ENCODE measurements at regions of chr3 and their contacts with region 1.

Region 1: DNA sequence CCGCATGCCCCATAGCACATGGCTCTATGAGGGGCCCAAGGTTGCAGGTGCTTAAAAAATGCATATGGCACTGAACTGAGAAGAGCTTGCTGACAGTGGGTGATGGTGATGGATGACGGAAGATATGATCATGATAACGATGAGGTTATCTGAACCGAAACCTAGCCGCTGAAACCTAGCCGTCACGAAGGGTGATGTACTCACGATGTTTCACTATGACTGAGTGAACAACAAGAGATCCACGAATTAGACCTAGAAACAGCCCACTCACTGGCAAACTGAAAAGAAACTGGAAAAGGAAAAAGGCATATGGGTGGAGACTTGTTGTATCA is 57.6 kb upstream of the BCL6 start:
- DNase-seq: peak; percentile 94
- H3K4me3 Mint-ChIP-seq: peak overlapping the region; percentile 36
- H3K27ac Mint-ChIP-seq: peak overlapping the region; percentile 97
- H3K4me1 Mint-ChIP-seq: peaks cover 90% of the 10 kb centered on the region
- H3K27me3 Mint-ChIP-seq: no peaks in the 10 kb centered on the region

Region 2: DNA sequence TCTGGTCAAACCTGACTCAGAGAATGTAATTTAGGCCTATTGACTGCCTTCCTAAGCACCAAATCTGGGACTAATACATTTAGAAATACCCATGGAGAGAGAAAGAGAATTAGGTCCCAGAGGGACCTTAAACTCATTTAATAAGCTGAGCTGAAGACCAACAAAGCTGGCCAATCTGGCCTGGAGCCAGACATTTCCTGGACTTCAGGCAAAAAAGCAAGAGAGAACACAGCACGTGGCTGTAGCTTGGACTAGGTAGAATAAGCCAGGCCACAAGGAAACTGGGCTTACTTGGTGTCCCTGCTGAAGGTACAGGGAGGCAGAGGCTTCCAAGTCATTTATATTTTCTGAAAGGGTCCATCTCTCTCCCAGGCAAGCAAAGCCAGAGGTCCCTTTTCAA is 346.6 kb before region 1 on chr3:
- intact Hi-C with region 1: no loop called
- DNase-seq: no peak
- H3K4me3 Mint-ChIP-seq: no peak overlapping the region
- H3K27ac Mint-ChIP-seq: no peak overlapping the region
- H3K4me1 Mint-ChIP-seq: no peaks in the 10 kb centered on the region
- H3K27me3 Mint-ChIP-seq: peaks cover 16% of the 10 kb centered on the region

Region 3: DNA sequence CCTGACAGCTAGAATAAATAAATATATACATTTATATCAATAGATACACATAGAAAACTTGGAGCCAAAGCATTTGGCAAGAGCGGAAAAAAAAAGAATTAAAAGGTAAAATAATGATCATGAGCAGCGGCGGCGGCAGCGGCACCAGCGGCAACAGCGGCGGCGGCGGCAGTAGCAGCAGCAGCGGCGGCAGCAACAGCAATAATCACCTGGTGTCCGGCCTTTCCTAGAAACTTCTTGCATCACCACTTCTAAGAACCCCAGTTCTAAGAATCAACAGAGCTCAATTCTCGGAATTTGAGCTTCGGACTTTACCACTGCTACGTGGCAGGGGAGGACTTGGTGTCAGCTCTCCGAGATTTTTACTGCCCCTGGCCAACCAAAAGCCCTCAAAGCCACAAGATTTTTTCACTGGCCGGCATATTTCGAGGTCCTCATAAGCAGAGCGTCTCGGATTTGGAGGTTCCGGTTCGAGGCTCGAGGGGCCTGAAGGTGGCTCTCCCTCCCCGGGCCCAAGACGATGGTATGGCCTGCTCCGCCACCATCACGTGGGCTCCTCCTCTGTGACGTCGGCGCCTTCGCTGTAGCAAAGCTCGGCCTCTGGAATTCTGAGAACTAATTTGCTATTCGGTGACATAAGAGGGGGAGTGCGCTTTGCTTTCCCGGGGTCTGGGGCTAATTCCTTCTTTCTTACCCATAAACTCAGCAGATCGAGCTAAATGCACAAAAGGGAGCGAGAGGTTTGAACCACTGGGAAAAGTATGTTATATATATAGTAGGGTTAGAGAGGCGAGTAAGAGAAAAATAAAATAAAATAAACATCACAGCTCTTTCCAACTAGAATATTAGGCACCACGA is 57.5 kb before region 1 on chr3 and contains the start of gene BCL6:
- intact Hi-C with region 1: loop called (anchors 1 kb)
- DNase-seq: peak; percentile 97
- H3K4me3 Mint-ChIP-seq: peak within 1 kb of the TSS; percentile 98
- H3K27ac Mint-ChIP-seq: peak within 1 kb of the TSS; percentile 99
- H3K4me1 Mint-ChIP-seq: peaks cover 61% of the 10 kb centered on the region
- H3K27me3 Mint-ChIP-seq: no peaks in the 10 kb centered on the region
- total RNA-seq, gene BCL6: 41.7 and 51.7 TPM in 2 replicates

Region 4: GRCh38 chr3:187822402-187822801 is 19.5 kb after region 1 on chr3:
- intact Hi-C with region 1: no loop called
- DNase-seq: peak; percentile 78
- H3K4me3 Mint-ChIP-seq: peak overlapping the region; percentile 17
- H3K27ac Mint-ChIP-seq: peak overlapping the region; percentile 84
- H3K4me1 Mint-ChIP-seq: peaks cover 27% of the 10 kb centered on the region
- H3K27me3 Mint-ChIP-seq: no peaks in the 10 kb centered on the region

Region 5: DNA sequence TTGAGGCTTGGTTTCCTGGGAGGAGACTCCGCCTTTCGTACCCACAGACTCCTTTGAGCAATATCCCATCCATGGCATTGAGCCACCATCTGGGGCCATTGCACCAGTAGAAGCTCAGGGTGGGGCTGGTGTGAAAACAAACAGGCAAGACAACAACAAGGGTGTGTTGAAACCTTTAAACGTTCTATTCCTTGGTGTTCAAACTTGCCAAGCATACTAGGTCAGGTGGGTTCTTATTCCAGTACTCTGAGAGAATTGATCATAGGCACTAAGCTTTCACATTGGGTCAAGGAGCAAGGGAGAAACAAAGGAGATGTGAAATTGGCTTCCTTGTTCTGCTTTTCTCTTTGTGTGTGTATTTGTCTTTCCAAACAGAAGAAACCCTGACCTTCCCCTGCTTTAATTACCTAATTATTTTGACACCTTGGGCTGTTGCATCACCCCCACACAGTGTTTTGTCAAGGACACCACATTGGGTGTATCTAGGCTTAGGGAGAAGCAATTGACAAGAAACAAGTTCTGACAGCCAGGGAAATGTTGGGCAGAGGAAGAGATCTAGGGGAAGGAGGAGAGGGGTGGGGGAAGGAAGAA is 47.5 kb after region 1 on chr3:
- intact Hi-C with region 1: loop called (anchors 5 kb)
- DNase-seq: no peak
- H3K4me3 Mint-ChIP-seq: no peak overlapping the region
- H3K27ac Mint-ChIP-seq: no peak overlapping the region
- H3K4me1 Mint-ChIP-seq: peaks cover 10% of the 10 kb centered on the region
- H3K27me3 Mint-ChIP-seq: no peaks in the 10 kb centered on the region

Region 6: DNA sequence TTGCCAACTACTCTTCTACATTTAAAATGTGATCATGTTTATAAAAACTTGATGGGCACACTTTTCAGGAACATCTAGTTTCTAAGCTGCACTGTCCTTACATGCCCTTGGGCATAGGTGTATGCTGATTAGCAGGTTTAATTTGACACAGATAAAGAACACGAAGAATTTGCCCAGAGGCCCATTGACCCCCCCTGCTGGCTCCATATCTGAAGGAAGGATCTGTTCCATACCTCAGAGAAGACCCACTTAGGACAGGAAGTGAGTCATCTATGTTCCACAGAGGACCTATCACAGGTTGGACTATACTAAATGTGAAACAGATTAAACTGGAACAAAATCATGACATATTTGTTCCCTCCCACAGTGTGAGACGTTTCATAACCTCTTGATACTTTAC is 258.2 kb after region 1 on chr3:
- intact Hi-C with region 1: loop called (anchors 5 kb)
- DNase-seq: peak; percentile 85
- H3K4me3 Mint-ChIP-seq: peak overlapping the region; percentile 66
- H3K27ac Mint-ChIP-seq: peak overlapping the region; percentile 88
- H3K4me1 Mint-ChIP-seq: peaks cover 32% of the 10 kb centered on the region
- H3K27me3 Mint-ChIP-seq: no peaks in the 10 kb centered on the region

Region 7: DNA sequence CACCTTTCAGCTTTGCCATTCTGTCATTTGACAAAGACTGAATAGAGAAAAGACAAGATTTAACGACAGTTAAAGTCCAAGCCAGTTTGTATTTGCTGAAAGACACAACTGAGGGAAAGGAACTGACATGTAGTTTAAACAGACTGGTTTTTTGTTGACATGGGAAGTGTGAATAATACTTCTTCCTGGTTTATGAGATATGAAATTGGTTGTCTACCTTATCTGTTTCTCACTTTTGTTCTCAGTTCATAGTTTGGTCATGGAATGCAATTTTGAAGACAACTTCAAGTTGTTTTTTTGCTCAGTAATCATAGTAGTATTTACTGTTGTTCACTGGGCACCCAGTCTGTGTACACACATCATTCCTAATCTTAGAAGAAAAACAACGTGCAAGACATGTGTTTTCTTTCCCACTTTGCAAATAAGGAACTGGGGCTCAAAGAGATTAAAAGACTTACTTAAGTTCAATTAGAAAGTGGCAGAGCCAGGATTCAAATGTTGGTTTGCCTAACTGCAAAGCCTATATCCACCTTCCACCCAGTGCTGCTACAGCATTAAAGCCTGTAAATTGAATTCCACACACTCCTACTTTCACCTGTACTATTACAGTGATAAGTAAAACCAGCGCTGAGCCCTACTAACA is 454.6 kb after region 1 on chr3:
- intact Hi-C with region 1: loop called (anchors 2 kb)
- DNase-seq: no peak
- H3K4me3 Mint-ChIP-seq: no peak overlapping the region
- H3K27ac Mint-ChIP-seq: peak overlapping the region; percentile 85
- H3K4me1 Mint-ChIP-seq: peaks cover 47% of the 10 kb centered on the region
- H3K27me3 Mint-ChIP-seq: no peaks in the 10 kb centered on the region

Region 8: GRCh38 chr3:188683032-188683521 is 880.2 kb after region 1 on chr3:
- intact Hi-C with region 1: loop called (anchors 10 kb)
- DNase-seq: no peak
- H3K4me3 Mint-ChIP-seq: no peak overlapping the region
- H3K27ac Mint-ChIP-seq: peak overlapping the region; percentile 47
- H3K4me1 Mint-ChIP-seq: peaks cover 28% of the 10 kb centered on the region
- H3K27me3 Mint-ChIP-seq: no peaks in the 10 kb centered on the region